ENCODE measurements at regions of chr13 and their contacts with region 1.

Region 1: GRCh38 chr13:29817604-29818378 is 32.6 kb downstream of the UBL3 start:
- DNase-seq: no peak
- H3K4me3 Mint-ChIP-seq: peak overlapping the region; percentile 11
- H3K27ac Mint-ChIP-seq: peak overlapping the region; percentile 65
- H3K4me1 Mint-ChIP-seq: peaks cover 50% of the 10 kb centered on the region
- H3K27me3 Mint-ChIP-seq: no peaks in the 10 kb centered on the region

Region 2: GRCh38 chr13:29621051-29621757 is 196.6 kb before region 1 on chr13:
- CTCF ChIA-PET with region 1: no interaction called
- intact Hi-C with region 1: no loop called
- DNase-seq: no peak
- H3K4me3 Mint-ChIP-seq: no peak overlapping the region
- H3K27ac Mint-ChIP-seq: no peak overlapping the region
- H3K4me1 Mint-ChIP-seq: no peaks in the 10 kb centered on the region
- H3K27me3 Mint-ChIP-seq: peaks cover 25% of the 10 kb centered on the region

Region 3: DNA sequence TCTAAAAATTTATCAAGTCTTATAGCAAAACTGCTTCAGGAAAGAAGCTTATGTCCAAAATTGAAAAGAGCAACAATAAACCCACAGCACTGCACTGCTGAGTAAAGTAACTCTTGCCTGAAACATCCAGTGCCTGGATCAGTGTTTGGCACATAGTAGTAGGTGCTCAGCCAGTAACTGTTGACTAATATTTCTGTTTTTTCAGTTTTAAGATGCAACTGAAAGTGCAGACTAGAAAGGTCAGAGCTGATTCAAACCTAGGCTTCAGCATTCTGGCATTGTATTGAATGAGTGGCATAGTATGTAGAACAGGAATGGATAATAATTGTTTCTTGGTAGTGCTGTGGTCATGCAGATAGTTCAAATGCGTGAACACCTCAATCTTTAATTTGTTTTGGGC is 35.0 kb before region 1 on chr13:
- CTCF ChIA-PET with region 1: interaction called, 3 read pairs
- intact Hi-C with region 1: loop called (anchors 2 kb)
- DNase-seq: peak; percentile 39
- H3K4me3 Mint-ChIP-seq: no peak overlapping the region
- H3K27ac Mint-ChIP-seq: no peak overlapping the region
- H3K4me1 Mint-ChIP-seq: peaks cover 16% of the 10 kb centered on the region
- H3K27me3 Mint-ChIP-seq: no peaks in the 10 kb centered on the region

Region 4: DNA sequence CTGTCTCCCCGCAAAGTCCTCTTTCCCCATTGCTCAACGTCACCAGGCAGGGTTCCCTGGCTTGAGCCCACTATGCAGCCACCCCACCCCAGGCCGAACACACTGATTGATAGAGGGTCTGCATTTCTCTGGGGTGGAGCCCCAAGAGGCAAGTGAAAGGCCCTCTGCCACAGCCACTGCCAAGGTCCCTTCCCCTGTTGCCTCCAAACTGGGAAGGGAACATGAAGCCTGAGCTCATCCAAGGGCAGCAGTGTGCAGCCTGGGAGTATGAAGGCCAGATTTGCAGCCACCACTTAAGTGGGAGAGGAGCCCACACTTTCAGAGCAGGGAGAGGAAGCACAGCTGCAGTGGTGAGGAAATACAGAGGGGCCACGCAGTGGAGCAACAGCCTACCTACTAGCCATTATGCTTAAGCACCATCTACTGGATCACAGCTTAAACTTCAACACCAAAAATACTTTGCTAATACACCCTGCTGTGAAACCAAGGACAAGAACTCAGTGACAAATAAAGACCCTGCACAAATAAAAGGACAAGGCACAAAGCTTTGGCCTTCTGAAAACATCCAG is 16.0 kb before region 1 on chr13:
- CTCF ChIA-PET with region 1: interaction called, 4 read pairs
- intact Hi-C with region 1: loop called (anchors 1 kb)
- DNase-seq: no peak
- H3K4me3 Mint-ChIP-seq: no peak overlapping the region
- H3K27ac Mint-ChIP-seq: no peak overlapping the region
- H3K4me1 Mint-ChIP-seq: peaks cover 23% of the 10 kb centered on the region
- H3K27me3 Mint-ChIP-seq: no peaks in the 10 kb centered on the region

Region 5: GRCh38 chr13:29835280-29836061 is 17.7 kb after region 1 on chr13:
- CTCF ChIA-PET with region 1: interaction called, 3 read pairs
- intact Hi-C with region 1: loop called (anchors 2 kb)
- DNase-seq: no peak
- H3K4me3 Mint-ChIP-seq: no peak overlapping the region
- H3K27ac Mint-ChIP-seq: no peak overlapping the region
- H3K4me1 Mint-ChIP-seq: peaks cover 55% of the 10 kb centered on the region
- H3K27me3 Mint-ChIP-seq: no peaks in the 10 kb centered on the region

Region 6: GRCh38 chr13:29917650-29918049 is 99.9 kb after region 1 on chr13:
- CTCF ChIA-PET with region 1: no interaction called
- intact Hi-C with region 1: no loop called
- DNase-seq: no peak
- H3K4me3 Mint-ChIP-seq: no peak overlapping the region
- H3K27ac Mint-ChIP-seq: no peak overlapping the region
- H3K4me1 Mint-ChIP-seq: no peaks in the 10 kb centered on the region
- H3K27me3 Mint-ChIP-seq: no peaks in the 10 kb centered on the region

Measured in activated naive CD4-positive, alpha-beta T cell treated with anti-CD3 and anti-CD28 coated beads for 36 hours (primary cell).